ENCODE measurements at regions of chr6 and their contacts with region 1.

Region 1: DNA sequence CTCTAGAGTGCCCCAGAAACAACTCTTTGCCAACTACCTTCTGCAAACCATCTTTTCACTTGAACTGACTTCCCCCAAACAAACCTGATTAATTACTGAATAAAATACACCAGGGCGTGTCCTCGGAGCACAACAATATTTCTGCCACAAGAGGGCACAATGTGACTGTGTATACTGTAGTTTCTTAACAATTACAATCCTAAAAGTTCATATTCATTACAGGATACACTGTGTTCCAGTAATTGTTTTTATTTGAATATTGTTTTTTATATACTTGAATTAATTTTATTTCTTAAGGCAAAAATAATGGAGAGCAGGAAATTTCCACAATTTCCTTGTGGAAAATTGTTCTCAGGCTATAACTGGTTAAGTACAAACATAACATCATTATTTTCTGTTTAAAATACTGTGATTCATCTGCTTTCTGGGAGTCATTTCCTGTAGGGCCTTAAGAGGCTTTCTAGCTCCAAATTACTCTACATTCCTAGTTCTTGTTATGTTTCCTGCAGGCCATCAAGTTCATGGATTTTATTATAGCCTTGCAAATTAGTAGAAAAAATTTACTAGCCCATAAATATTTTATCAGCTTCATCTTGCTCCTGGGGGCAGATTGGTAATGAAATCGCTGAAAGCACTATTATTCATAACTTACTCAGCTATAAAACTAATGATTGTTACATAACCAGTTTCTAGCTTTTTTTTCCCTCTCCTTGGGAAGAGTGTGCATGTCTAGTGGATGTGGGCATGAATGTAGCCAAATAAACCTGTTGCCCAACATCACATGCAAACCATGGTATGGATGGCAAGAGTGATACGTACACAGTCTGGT is 51.9 kb upstream of the SLC22A16 start:
- DNase-seq: peak in 1 of 2 donors; percentile 81
- ATAC-seq: peak; percentile 64 to 76 (median 64)
- H3K4me3 ChIP-seq: no peak overlapping the region
- H3K4me3 Mint-ChIP-seq: no peak overlapping the region
- H3K27ac ChIP-seq: no peak overlapping the region
- H3K27ac Mint-ChIP-seq: no peak overlapping the region
- H3K4me1 ChIP-seq: no peaks in the 10 kb centered on the region
- H3K4me1 Mint-ChIP-seq: no peaks in the 10 kb centered on the region
- H3K27me3 ChIP-seq: no peaks in the 10 kb centered on the region
- H3K27me3 Mint-ChIP-seq: peaks cover 7 to 8% of the 10 kb centered on the region in 2 donors
- CTCF ChIP-seq: peak; percentile 81

Region 2: GRCh38 chr6:110285306-110286060 is 242.8 kb before region 1 on chr6:
- intact Hi-C with region 1: no loop called
- DNase-seq: no peak
- ATAC-seq: no peak
- H3K4me3 ChIP-seq: no peak overlapping the region
- H3K4me3 Mint-ChIP-seq: no peak overlapping the region
- H3K27ac ChIP-seq: no peak overlapping the region
- H3K27ac Mint-ChIP-seq: no peak overlapping the region
- H3K4me1 ChIP-seq: no peaks in the 10 kb centered on the region
- H3K4me1 Mint-ChIP-seq: peaks cover 0 to 16% of the 10 kb centered on the region in 2 donors
- H3K27me3 ChIP-seq: no peaks in the 10 kb centered on the region
- H3K27me3 Mint-ChIP-seq: peaks cover 0 to 3% of the 10 kb centered on the region in 2 donors
- CTCF ChIP-seq: no peak

Region 3: GRCh38 chr6:110949679-110950285 is 421.5 kb after region 1 on chr6:
- intact Hi-C with region 1: loop called (anchors 1 kb)
- DNase-seq: peak in 1 of 2 donors; percentile 62
- ATAC-seq: peak in 2 of 3 donors; percentile 32 to 34
- H3K4me3 ChIP-seq: no peak overlapping the region
- H3K4me3 Mint-ChIP-seq: no peak overlapping the region
- H3K27ac ChIP-seq: no peak overlapping the region
- H3K27ac Mint-ChIP-seq: no peak overlapping the region
- H3K4me1 ChIP-seq: no peaks in the 10 kb centered on the region
- H3K4me1 Mint-ChIP-seq: no peaks in the 10 kb centered on the region
- H3K27me3 ChIP-seq: no peaks in the 10 kb centered on the region
- H3K27me3 Mint-ChIP-seq: peaks cover 2 to 8% of the 10 kb centered on the region in 2 donors
- CTCF ChIP-seq: peak; percentile 67

Region 4: DNA sequence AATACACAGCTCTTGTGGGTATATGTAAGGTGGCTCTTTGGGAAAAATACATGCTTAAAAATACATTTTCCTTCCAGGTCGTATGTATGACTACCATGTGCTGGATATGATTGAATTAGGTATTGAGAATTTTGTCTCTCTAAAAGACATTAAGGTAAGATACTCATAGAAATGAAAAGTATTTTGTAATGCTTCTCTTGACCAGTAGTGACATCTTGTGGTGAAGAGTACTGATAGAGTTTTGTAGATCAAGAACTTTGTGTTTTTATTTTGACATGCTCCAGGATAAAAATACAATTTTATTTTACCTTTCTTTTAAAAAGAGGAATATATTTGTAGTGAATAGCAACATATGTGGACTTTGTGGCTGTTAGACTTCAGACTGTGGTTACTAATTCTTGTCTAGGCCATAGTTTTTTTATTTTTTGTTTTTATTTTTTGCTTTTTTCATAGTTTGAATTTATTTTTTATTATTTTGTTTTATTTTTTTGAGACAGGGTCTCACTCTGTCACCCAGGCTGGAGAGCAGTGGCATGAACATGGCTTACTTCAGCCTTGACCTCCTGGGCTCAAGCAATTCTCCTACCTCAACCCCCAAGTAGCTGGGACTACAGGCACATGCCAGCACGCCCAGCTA is 471.4 kb after region 1 on chr6:
- intact Hi-C with region 1: loop called (anchors 1 kb)
- DNase-seq: peak in 1 of 2 donors; percentile 63
- ATAC-seq: no peak
- H3K4me3 ChIP-seq: no peak overlapping the region
- H3K4me3 Mint-ChIP-seq: no peak overlapping the region
- H3K27ac ChIP-seq: no peak overlapping the region
- H3K27ac Mint-ChIP-seq: peak overlapping the region in 1 of 2 donors; percentile 15
- H3K4me1 ChIP-seq: no peaks in the 10 kb centered on the region
- H3K4me1 Mint-ChIP-seq: no peaks in the 10 kb centered on the region
- H3K27me3 ChIP-seq: no peaks in the 10 kb centered on the region
- H3K27me3 Mint-ChIP-seq: no peaks in the 10 kb centered on the region
- CTCF ChIP-seq: peak; percentile 31

Measured in natural killer cell (primary cell).